Posterior vena cava (tissue), 2 donors: ENCODE measurements at regions of chr11 and their contacts with region 1.

Region 1: GRCh38 chr11:124983674-124984511 is 29.9 kb downstream of the CCDC15 start:
- DNase-seq: no peak

Region 2: GRCh38 chr11:123760894-123761293 is 1223.0 kb before region 1 on chr11:
- intact Hi-C with region 1: no loop called
- DNase-seq: no peak

Region 3: DNA sequence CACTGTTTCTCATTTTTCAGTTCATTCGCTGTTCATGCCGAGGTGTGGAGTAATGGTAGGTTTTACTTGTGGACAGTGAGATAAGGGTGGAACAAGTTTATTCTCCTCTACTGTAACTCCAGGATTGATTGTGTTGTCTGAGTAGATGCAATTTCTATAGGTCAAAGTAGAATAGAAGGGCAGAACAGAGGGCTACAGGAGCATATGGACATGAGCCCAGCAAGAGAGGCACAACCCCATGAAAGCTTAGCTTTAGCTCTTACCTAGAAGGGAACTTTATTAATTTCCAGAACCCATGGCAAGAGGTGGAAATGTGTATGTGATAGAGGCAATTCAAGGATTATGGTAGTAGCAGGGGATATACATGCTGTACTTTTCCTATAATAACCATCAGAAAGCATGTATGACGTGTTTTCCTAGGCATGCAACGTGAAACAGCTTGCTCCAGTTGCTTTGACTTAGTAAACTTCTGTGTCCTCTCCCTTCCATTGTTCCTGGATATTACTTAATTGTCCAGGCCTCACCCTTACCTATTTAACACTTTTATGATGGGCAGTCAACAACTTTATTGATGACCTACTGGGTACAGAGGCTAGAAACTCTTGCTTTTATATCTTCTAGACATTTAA is 65.4 kb after region 1 on chr11:
- intact Hi-C with region 1: loop called in 1 of 2 experiments (anchors 2 kb)
- DNase-seq: no peak